Sigmoid colon (tissue), 7 donors: ENCODE measurements at regions of chr5 and their contacts with region 1.

Region 1: GRCh38 chr5:157820593-157821252 is 38.2 kb downstream of the CLINT1 start:
- DNase-seq: no peak
- H3K4me3 ChIP-seq: no peak overlapping the region
- H3K27ac ChIP-seq: peak overlapping the region; percentile 50 to 85 (median 74)
- H3K4me1 ChIP-seq: peaks cover 0 to 78% (median 66%) of the 10 kb centered on the region in 4 donors
- H3K27me3 ChIP-seq: no peaks in the 10 kb centered on the region
- CTCF ChIP-seq: peak in 3 of 4 experiments; percentile 37 to 58 (median 43)
- EP300 ChIP-seq: no peak
- POLR2A ChIP-seq: no peak

Region 2: GRCh38 chr5:157761690-157762621 is 58.8 kb before region 1 on chr5:
- intact Hi-C with region 1: loop called (anchors 5 kb)
- DNase-seq: no peak
- H3K4me3 ChIP-seq: no peak overlapping the region
- H3K27ac ChIP-seq: no peak overlapping the region
- H3K4me1 ChIP-seq: peaks cover 0 to 12% (median 4%) of the 10 kb centered on the region in 4 donors
- H3K27me3 ChIP-seq: no peaks in the 10 kb centered on the region
- CTCF ChIP-seq: peak; percentile 44 to 78 (median 69)
- EP300 ChIP-seq: no peak
- POLR2A ChIP-seq: no peak

Region 3: DNA sequence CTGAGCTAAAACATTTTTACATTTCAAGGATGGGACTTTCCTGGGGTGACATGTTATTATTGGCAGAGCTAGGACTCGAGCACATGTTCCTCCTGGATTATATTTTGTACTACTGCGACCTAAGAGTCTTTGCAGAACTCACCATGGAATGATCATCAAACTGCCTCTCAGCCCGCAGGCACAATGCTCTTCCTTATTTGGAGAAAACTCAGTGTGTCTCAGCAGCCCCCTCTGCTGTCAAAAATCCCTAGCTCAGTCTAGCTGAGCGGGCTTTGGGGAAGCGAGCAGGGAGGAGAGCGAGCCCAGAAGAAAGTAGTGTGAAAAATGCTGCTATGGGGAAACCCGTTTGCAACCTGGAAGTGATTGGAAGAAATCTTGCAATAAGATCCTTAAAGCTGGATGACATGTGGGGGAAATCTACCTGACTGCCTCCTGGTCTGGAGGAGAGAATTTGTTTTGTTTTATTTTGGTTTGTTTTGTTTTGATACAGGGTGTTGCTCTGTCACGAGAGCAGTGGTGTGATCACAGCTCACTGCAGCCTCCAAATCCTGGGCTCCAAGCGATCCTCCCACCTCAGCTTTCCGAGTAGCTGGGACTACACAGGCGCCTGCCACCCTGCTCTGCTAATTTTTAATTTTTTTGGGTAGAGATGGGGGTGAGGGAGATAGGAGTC is 128.2 kb after region 1 on chr5:
- intact Hi-C with region 1: loop called (anchors 2 kb)
- DNase-seq: peak; percentile 96
- H3K4me3 ChIP-seq: peak overlapping the region in 2 of 4 donors; percentile 4 to 7
- H3K27ac ChIP-seq: peak overlapping the region; percentile 77 to 84 (median 79)
- H3K4me1 ChIP-seq: peaks cover 0 to 18% (median 7%) of the 10 kb centered on the region in 4 donors
- H3K27me3 ChIP-seq: no peaks in the 10 kb centered on the region
- CTCF ChIP-seq: peak; percentile 69 to 82 (median 76)
- EP300 ChIP-seq: peak; percentile 31 to 95 (median 76)
- POLR2A ChIP-seq: no peak

Region 4: DNA sequence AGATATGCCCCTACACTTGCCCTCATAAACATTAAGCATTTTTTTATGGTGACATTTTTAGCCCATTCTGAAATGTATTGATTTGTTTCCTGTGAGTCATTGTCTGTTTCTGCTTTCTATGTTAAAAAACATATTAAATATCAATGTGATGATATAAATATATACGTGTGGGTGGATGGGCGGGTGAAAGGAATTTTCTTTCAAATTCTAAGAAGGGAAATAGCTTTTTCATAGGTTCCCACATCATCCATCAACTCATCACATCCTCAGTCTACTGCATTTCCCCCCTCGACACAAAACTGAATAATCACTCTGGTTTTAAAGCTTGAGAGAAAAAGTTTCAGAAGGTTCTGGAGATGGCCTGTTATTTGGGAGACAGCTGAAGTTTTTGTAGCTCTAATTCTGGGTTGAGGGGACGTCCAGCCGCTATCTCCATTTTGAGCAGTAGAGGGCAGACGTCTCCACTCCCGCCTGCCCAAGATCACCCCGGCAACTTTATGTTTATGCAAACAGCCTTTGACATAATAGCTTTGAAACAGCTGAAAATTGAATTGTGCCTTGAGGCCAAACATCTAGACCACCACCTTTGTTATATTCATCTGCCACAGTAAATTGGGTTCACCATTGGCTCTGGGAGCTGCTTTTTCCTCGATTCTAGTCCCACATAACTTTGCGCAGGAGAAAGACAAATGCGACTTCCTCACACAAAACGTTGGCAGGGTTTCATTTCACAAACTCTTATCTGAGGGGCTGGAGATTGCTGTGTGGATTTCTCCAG is 254.5 kb after region 1 on chr5:
- intact Hi-C with region 1: loop called (anchors 10 kb)
- DNase-seq: peak; percentile 77
- H3K4me3 ChIP-seq: peak overlapping the region in 3 of 4 donors; percentile 23 to 38 (median 31)
- H3K27ac ChIP-seq: peak overlapping the region in 3 of 4 donors; percentile 20 to 47 (median 34)
- H3K4me1 ChIP-seq: no peaks in the 10 kb centered on the region
- H3K27me3 ChIP-seq: no peaks in the 10 kb centered on the region
- CTCF ChIP-seq: peak; percentile 38 to 81 (median 58)
- EP300 ChIP-seq: no peak
- POLR2A ChIP-seq: no peak

Region 5: GRCh38 chr5:159106569-159107282 is 1286.0 kb after region 1 on chr5:
- intact Hi-C with region 1: loop called (anchors 10 kb)
- DNase-seq: peak; percentile 88
- H3K4me3 ChIP-seq: peak overlapping the region; percentile 8 to 36 (median 32)
- H3K27ac ChIP-seq: peak overlapping the region in 1 of 4 donors; percentile 51
- H3K4me1 ChIP-seq: peaks cover 0 to 26% (median 24%) of the 10 kb centered on the region in 4 donors
- H3K27me3 ChIP-seq: peaks cover 21 to 68% (median 55%) of the 10 kb centered on the region in 3 donors
- CTCF ChIP-seq: peak; percentile 73 to 91 (median 86)
- EP300 ChIP-seq: no peak
- POLR2A ChIP-seq: no peak